Posterior vena cava (tissue), 2 donors: ENCODE measurements at regions of chr11 and their contacts with region 1.

Region 1: GRCh38 chr11:61803889-61804647 is 11.4 kb downstream of the FEN1 start:
- DNase-seq: no peak

Region 2: DNA sequence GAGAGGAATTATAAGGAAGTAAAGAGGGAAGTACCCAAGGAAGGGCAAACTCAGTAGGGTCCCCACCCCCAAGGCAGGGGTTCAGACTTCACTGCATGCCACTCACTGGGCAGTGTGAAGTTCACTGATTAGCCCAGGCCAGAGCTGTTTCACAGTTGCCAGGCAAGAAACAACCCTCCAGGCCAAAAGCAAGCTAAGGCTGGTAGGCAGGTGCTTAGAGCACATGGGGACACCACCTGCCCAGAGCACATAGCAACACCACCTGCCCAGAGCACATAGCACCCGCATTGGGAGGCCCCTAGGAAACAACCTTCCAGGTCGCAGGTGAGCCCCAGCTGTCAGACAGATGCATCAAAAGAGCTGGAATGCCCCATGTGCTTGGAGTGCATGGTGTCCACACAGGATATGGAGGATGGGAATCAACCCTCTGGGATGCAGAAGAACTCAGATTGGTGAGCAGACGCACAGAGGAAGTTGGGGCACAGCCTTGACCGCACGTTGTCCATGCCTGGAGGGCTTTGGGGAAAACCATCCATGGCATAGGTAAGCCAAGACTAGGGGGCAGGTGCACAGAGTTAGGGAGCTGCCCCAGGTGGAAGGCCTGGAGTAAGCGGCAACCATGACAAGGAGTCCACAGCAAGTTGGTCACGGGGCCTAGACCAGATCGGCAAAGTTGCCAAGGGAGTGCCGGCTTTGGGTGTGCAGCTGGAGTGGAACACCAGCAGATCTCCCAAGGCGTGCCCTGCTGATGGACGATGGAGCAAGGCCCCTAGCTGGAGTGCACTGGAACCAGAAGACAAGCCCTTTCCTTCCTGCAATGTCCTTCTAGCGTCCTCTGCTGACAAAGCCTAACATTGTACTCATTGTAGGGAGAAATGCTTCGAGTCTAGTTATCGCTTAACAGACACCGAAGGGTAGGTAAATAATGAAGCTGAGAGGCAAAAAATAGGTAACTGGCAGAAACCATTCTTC is 419.5 kb before region 1 on chr11:
- intact Hi-C with region 1: no loop called
- DNase-seq: no peak

Region 3: DNA sequence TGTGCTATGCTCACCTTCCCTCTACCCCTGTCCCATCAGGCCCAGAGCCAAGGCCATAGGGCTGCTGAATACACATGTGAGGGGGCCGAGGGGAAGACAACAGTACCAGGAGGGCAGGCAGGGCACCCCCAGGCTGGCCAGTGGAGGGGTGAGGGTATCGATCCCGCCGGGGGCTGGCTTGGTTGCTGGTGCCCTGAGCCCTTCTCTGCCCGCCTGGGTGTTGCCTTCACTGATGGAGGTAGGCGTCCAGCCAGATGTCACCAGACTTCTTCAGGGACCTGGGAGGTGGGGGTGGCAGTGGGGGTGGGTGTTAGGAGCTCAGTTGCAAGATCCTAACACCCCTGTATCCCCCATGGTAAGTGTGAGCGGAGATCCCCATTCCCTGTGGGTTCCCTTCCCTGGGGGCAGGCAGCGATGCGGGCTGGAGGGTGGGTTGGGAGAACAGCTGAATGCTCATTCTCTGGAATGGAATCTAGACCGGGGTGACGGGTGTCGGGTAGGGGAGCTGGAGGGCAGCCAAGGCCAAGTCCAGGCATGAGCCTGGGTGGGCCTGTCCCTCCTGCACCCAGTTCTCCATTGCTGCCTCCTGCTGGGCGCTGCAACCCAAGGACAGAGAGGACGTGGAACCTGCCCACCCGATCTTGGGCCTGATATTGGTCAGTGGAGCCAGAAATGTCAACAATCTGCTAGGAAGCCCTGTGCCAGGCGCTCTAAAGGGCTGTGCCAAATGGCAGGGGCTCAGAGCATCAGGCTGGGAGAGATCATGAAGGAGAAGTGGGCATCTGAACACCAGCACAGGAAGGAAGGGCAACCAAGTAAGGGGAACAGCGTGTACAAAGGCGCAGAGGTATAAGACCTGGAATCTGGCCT is 69.8 kb after region 1 on chr11:
- intact Hi-C with region 1: loop called in 1 of 2 experiments (anchors 2 kb)
- DNase-seq: no peak

Region 4: DNA sequence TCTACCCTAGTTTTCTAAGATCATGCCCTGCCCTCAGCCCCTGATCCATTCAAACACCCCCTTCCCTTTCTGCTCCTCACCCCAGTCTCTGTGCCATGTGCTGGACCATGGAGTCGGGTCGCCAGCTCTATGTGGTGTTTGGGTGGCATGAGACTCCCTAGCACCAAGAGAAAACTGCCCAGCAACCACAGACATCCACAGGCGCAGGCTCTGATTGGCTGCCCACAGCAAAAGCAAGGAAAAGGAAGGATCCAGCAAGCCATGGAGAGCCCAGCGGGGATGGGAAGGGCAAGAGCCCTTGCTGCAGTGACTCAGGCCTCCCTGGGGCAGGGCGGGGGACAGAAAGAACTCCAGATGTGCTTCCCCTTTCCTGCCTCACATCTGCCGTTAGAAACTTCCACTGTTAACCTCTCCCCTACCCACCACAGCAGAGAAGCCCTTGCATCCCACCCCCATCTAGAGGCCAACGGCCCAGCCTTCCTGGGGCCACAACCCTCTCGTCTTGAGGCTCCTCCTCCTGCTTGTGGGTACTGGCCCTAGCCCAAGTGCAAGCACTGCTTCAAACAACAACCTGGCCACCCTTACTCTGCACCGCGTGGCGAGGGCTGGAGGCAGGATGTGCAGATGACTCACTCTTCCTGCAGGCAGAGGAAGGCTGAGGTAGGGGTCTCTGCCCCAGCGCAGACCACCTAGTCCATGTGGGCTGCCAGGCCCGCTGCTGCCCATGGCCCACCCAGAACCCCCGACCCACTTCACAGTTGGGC is 752.2 kb after region 1 on chr11:
- intact Hi-C with region 1: loop called in 1 of 2 experiments (anchors 10 kb)
- DNase-seq: peak; percentile 97